Panc1 (cell line): ENCODE measurements at regions of chr5 and their contacts with region 1.

Region 1: DNA sequence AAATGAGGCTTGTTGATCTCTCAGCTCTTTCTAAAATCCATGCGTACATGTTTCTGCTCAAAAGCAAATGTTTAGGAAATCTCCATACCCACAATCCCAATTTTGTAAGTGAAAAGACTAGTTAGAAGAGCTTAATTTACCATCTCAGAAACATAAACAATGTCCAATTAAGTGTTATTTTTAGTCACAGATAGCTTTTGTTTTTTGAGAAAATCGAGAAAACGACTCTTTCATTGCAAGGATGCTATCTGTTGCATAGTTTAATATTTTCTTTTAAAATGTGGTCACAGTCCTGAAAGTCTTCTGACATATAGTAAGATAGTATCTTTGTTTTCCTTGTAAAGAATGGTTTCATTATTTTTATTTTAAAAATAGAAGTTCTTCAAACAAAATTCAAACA is 338.0 kb upstream of the DAB2 start:
- DNase-seq: no peak
- ATAC-seq: no peak
- H3K4me3 ChIP-seq: no peak overlapping the region
- H3K27ac ChIP-seq: no peak overlapping the region
- H3K4me1 ChIP-seq: no peaks in the 10 kb centered on the region
- H3K27me3 ChIP-seq: no peaks in the 10 kb centered on the region
- CTCF ChIP-seq: no peak

Region 2: GRCh38 chr5:39726467-39726866 is 36.3 kb before region 1 on chr5:
- CTCF ChIA-PET with region 1: no interaction called
- POLR2A ChIA-PET with region 1: interaction called, 10 read pairs
- in situ Hi-C with region 1: no loop called
- intact Hi-C with region 1: no loop called
- DNase-seq: no peak
- ATAC-seq: no peak
- H3K4me3 ChIP-seq: no peak overlapping the region
- H3K27ac ChIP-seq: no peak overlapping the region
- H3K4me1 ChIP-seq: no peaks in the 10 kb centered on the region
- H3K27me3 ChIP-seq: no peaks in the 10 kb centered on the region
- CTCF ChIP-seq: no peak

Region 3: DNA sequence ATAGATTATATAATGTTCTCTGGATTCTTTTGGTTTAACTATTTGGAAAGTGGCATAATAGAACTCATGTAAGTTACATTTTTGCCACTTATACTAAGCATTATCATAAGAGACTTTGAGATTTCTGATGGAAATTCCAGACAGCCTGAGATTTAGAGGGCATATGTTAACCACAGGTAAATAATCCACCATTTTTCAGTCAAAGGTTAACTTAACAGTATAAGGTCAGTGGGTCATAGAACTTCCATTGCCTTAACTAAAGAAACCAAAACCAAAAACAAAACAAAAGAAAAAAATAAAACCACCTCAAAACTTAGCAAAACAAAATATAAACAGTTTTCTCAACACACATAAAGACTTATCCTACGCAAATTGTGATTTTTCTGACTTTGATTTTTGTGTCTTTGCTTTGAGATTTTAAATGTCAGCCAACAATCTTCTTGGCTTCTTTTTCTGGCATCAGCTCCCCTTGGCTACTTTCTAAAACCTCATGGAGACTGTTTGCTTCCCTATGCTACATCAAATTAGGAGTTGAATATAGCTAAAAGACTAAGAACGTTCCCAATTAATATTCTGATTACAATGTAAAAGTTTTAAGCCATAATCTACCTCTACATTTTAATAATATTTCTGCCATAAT is 92.1 kb after region 1 on chr5:
- CTCF ChIA-PET with region 1: no interaction called
- POLR2A ChIA-PET with region 1: no interaction called
- in situ Hi-C with region 1: no loop called
- intact Hi-C with region 1: no loop called
- DNase-seq: no peak
- ATAC-seq: no peak
- H3K4me3 ChIP-seq: no peak overlapping the region
- H3K27ac ChIP-seq: no peak overlapping the region
- H3K4me1 ChIP-seq: no peaks in the 10 kb centered on the region
- H3K27me3 ChIP-seq: no peaks in the 10 kb centered on the region
- CTCF ChIP-seq: no peak

Region 4: DNA sequence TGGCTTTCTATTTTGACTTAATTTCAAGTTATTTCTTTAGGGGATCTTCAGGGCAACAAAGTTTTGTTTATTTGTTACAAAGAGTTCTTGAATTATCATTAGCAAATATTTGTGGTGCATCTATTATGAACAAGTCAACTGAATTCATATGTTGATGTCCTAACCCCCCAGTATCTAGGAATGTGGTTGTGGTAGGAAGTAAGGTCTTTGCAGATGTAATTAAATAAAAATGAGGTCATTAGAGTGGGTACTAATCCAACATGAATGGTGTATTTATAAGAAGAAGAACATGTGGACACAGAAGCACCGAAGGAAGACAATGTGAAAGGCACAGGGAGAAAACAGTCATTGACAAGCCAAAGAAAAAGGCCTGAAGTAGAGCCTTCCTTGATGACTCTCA is 136.0 kb after region 1 on chr5:
- CTCF ChIA-PET with region 1: no interaction called
- POLR2A ChIA-PET with region 1: no interaction called
- in situ Hi-C with region 1: no loop called
- intact Hi-C with region 1: no loop called
- DNase-seq: no peak
- ATAC-seq: no peak
- H3K4me3 ChIP-seq: no peak overlapping the region
- H3K27ac ChIP-seq: no peak overlapping the region
- H3K4me1 ChIP-seq: no peaks in the 10 kb centered on the region
- H3K27me3 ChIP-seq: no peaks in the 10 kb centered on the region
- CTCF ChIP-seq: no peak